BJ (cell line): ENCODE measurements at regions of chr9 and their contacts with region 1.

Region 1: DNA sequence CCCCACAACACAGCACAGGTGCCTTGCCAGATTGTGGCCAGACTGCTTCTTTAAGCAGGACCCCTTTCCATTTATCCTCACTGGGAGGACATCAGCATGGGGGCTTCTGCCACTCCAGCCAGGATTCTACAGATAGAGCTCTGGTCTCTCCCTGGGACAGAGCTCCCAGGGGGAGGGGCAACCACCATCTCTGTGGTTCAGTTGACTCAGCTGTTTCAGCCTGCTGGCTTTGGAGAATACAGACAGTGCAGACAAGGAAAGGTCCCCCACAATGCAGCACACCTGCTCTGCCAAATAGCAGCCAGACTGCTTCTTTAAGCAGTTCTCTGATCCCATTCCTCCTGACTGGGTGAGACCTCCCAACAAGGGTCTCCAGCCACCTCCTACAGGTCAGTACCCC is 132.8 kb downstream of the OR2K2 start:
- DNase-seq: no peak
- H3K4me3 ChIP-seq: no peak overlapping the region
- H3K27me3 ChIP-seq: no peaks in the 10 kb centered on the region
- CTCF ChIP-seq: no peak

Region 2: GRCh38 chr9:111016426-111017045 is 180.7 kb before region 1 on chr9:
- CTCF ChIA-PET with region 1: no interaction called
- POLR2A ChIA-PET with region 1: no interaction called
- DNase-seq: no peak
- H3K4me3 ChIP-seq: no peak overlapping the region
- H3K27me3 ChIP-seq: no peaks in the 10 kb centered on the region
- CTCF ChIP-seq: no peak

Region 3: DNA sequence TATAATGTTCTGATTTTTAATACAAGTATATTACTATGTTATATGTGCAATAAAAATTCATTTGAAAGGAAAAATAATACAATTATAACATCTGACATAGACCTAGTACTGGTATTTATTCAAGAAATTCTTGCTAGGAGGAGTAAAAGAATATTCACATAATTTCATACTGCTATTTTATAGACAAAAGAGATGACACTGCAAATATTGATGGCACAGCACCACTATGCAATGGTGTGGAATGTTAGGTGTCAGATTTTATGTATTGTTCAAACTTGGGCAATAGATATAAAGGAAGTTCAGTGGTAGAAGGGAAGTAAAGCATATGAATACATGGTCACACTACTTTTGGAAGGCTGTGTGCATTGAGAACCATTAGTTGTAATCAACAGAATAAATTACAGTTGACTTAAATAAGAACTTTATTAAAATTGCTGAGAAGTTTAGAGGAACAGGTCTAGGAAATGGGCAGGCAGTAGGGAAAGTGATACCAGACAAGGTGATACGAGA is 11.2 kb before region 1 on chr9:
- CTCF ChIA-PET with region 1: no interaction called
- POLR2A ChIA-PET with region 1: no interaction called
- DNase-seq: no peak
- H3K4me3 ChIP-seq: no peak overlapping the region
- H3K27me3 ChIP-seq: no peaks in the 10 kb centered on the region
- CTCF ChIP-seq: no peak

Region 4: DNA sequence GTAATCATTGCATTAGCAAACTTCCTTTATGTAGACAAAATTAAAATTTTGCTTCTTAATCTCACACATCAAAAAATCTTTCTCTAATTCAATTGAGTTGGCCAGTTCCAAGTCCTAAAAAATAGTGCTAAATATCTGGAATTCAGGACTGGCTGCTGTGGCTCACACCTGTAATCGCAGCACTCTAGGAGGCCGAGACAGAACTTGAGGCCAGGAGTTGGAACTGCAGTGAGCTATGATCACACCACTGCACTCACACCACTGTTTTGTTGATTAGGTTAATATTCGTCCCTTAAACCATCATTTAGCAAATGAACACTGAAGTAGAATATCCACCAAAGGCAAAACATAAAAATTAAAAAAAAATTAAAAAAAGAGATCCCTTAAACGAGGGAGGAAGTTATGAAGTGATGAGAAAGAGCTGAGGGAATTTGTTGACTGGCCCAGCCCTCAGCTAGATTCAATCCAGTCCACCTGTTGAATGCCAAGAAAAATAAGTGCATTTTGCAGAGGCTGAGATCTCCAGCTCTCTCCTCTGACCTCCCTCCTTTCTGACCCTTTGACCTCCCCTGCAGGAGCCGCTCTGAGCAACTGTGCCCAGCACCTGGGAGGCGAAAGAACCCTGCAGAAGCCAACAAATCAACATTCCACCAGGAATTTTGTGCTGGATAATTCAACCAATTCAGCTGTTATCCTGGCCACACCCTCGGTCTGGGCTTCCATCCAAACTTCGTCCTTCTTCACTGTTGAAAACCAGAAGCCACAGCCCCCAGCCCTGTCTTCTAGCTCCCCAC is 35.9 kb after region 1 on chr9:
- CTCF ChIA-PET with region 1: no interaction called
- POLR2A ChIA-PET with region 1: no interaction called
- DNase-seq: no peak
- H3K4me3 ChIP-seq: no peak overlapping the region
- H3K27me3 ChIP-seq: no peaks in the 10 kb centered on the region
- CTCF ChIP-seq: no peak

Region 5: DNA sequence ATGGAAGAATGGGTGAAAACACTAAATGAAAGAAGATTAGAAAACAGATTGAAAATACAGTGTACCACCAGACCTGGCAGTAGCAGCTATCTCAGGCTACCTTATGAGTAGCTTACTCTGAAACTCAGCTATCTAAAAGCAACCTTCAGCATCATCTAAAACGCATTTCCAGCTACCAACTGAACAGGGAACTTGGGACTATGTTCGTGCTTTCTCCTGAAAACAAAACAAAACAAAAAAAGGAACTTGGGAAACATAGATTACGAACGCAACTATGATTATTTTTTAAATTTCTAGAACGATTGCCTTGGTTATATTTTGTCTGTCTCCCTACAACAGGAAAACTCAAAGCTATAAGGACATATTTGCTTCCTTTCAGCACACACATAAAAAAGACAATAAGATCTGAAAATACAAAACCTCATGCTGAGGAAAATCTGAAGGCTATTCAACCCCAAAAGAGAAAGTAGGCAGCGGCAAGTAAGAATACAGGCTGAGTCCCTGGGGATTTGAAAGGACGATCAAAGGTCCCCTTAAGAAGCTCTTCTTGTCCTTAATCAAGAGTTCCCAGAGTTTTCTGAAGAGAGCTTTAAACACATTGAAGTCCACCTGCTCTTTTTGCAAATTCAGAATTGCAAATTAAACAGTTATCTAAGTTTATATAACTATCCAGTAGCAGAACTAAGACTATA is 79.3 kb after region 1 on chr9:
- CTCF ChIA-PET with region 1: no interaction called
- POLR2A ChIA-PET with region 1: no interaction called
- DNase-seq: no peak
- H3K4me3 ChIP-seq: no peak overlapping the region
- H3K27me3 ChIP-seq: no peaks in the 10 kb centered on the region
- CTCF ChIP-seq: no peak

Region 6: DNA sequence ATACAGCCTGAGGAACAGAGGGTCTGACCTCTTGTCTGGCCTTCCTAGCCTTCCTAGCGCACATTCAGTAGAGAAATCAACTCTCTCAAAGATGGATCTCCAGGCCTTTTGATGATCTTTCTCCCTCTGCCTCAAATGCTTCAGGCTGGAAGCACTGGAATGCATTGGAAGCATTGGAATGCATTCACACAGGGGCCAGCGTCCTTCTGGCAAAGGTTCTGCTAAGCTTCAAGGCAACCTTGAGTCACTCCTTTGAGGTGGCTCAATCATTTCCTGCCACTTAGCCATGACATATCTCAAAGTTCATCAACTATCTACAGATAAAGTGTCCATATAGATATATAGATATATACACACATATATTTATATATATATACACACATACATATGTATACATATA is 89.9 kb after region 1 on chr9:
- CTCF ChIA-PET with region 1: no interaction called
- POLR2A ChIA-PET with region 1: interaction called, 10 read pairs
- DNase-seq: peak; percentile 26
- H3K4me3 ChIP-seq: no peak overlapping the region
- H3K27me3 ChIP-seq: no peaks in the 10 kb centered on the region
- CTCF ChIP-seq: no peak